PC-9 (cell line): ENCODE measurements at regions of chr17 and their contacts with region 1.

Region 1: GRCh38 chr17:75720725-75721462 is at the start of gene ITGB4:
- DNase-seq: peak; percentile 80 to 95
- H3K4me3 ChIP-seq: peak within 1 kb of the TSS; percentile 96
- H3K27ac ChIP-seq: peak within 1 kb of the TSS; percentile 38
- H3K4me1 ChIP-seq: peaks cover 28% of the 10 kb centered on the region
- H3K27me3 ChIP-seq: no peaks in the 10 kb centered on the region
- CTCF ChIP-seq: no peak
- total RNA-seq, gene ITGB4: 448 and 461 TPM in 2 replicates

Region 2: GRCh38 chr17:75498726-75499213 is 222.1 kb before region 1 on chr17:
- CTCF ChIA-PET with region 1: no interaction called
- POLR2A ChIA-PET with region 1: no interaction called
- intact Hi-C with region 1: no loop called
- DNase-seq: no peak
- H3K4me3 ChIP-seq: no peak overlapping the region
- H3K27ac ChIP-seq: no peak overlapping the region
- H3K4me1 ChIP-seq: no peaks in the 10 kb centered on the region
- H3K27me3 ChIP-seq: no peaks in the 10 kb centered on the region
- CTCF ChIP-seq: no peak

Region 3: DNA sequence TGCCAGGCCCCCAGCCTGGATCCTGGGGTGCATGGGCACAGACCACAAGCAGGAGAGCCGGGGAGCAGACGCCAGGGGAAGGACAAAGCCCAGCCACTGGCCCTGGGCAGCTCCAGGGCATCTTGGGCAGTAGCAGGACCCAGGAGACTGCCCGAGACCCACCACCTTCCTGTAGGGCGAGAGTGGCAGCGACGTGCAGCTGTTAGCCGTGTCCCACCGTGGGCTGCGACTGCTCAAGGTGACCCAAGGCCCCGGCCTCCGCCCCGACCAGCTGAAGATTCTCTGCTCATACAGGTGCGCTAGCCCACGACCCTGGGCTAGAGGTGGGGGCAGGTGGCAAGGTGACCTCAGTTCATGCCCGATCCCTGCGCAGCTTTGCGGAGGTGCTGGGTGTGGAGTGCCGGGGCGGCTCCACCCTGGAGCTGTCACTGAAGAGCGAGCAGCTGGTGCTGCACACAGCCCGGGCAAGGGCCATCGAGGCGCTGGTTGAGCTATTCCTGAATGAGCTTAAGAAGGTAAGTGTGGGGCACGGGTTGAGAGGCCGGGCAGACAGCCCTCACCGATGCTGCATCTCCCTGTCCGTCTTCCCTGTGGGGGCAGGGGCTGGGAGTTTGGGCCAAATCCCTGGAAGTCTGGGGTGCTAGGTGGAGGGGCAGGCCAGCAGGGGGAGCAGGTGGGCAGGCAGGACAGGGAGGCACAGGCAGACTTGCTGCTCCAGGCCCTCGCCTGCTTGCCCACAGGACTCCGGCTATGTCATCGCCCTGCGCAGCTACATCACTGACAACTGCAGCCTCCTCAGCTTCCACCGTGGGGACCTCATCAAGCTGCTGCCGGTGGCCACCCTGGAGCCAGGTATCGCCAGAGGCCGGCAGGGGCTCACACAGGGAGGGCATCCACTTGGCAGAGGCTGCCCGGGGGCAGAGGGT is 101.1 kb before region 1 on chr17:
- CTCF ChIA-PET with region 1: no interaction called
- POLR2A ChIA-PET with region 1: no interaction called
- intact Hi-C with region 1: no loop called
- DNase-seq: no peak
- H3K4me3 ChIP-seq: no peak overlapping the region
- H3K27ac ChIP-seq: no peak overlapping the region
- H3K4me1 ChIP-seq: no peaks in the 10 kb centered on the region
- H3K27me3 ChIP-seq: no peaks in the 10 kb centered on the region
- CTCF ChIP-seq: peak; percentile 70

Region 4: GRCh38 chr17:75679706-75680442 is 41.0 kb before region 1 on chr17:
- CTCF ChIA-PET with region 1: interaction called, 5 read pairs
- POLR2A ChIA-PET with region 1: interaction called, 17 read pairs
- intact Hi-C with region 1: loop called (anchors 1 kb)
- DNase-seq: peak; percentile 70 to 77
- H3K4me3 ChIP-seq: no peak overlapping the region
- H3K27ac ChIP-seq: peak overlapping the region; percentile 51
- H3K4me1 ChIP-seq: peaks cover 59% of the 10 kb centered on the region
- H3K27me3 ChIP-seq: no peaks in the 10 kb centered on the region
- CTCF ChIP-seq: peak; percentile 58

Region 5: GRCh38 chr17:75689441-75689873 is 31.4 kb before region 1 on chr17:
- CTCF ChIA-PET with region 1: interaction called, 5 read pairs
- POLR2A ChIA-PET with region 1: interaction called, 13 read pairs
- intact Hi-C with region 1: loop called (anchors 1 kb)
- DNase-seq: peak; percentile 57 to 96
- H3K4me3 ChIP-seq: peak overlapping the region; percentile 28; the same call in 1 of the 2 replicates
- H3K27ac ChIP-seq: peak overlapping the region; percentile 84
- H3K4me1 ChIP-seq: peaks cover 64% of the 10 kb centered on the region
- H3K27me3 ChIP-seq: no peaks in the 10 kb centered on the region
- CTCF ChIP-seq: no peak

Region 6: GRCh38 chr17:75707131-75707571 is 13.7 kb before region 1 on chr17:
- CTCF ChIA-PET with region 1: interaction called, 9 read pairs
- POLR2A ChIA-PET with region 1: interaction called, 10 read pairs
- intact Hi-C with region 1: loop called (anchors 1 kb)
- DNase-seq: peak; percentile 93 to 95
- H3K4me3 ChIP-seq: no peak overlapping the region
- H3K27ac ChIP-seq: peak overlapping the region; percentile 71
- H3K4me1 ChIP-seq: peaks cover 35% of the 10 kb centered on the region
- H3K27me3 ChIP-seq: no peaks in the 10 kb centered on the region
- CTCF ChIP-seq: no peak

Region 7: DNA sequence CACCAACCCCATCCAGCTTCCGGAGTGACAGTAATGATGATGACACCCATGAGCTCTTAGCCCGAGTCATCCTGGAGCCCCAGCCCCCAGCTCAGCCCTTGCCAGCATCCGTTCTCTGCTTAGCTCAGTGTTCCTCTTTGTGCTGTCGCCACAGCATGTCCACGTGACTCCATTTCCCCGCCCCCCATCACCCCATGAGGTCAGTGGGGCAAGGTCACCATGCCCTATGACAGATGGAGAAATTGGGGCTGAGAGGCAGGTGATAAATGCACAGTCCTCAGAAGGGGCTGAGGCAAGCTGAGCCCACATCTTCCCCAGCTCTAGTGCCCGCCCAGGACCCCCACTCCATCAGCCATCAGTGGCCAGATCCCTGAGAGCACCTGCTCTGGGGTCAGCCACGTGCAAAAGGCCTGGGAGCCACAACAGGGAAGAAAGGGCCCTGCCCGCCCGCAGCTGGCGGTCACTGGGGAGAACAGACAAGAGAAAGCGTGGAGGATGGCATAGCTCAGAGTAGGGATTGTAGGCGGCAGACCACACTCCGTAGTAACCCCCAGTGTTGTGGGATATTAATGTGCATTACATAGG is 17.4 kb after region 1 on chr17:
- CTCF ChIA-PET with region 1: no interaction called
- POLR2A ChIA-PET with region 1: interaction called, 25 read pairs
- intact Hi-C with region 1: no loop called
- DNase-seq: no peak
- H3K4me3 ChIP-seq: no peak overlapping the region
- H3K27ac ChIP-seq: no peak overlapping the region
- H3K4me1 ChIP-seq: no peaks in the 10 kb centered on the region
- H3K27me3 ChIP-seq: no peaks in the 10 kb centered on the region
- CTCF ChIP-seq: no peak

Region 8: GRCh38 chr17:75749545-75750389 is 28.9 kb after region 1 on chr17:
- CTCF ChIA-PET with region 1: interaction called, 5 read pairs
- POLR2A ChIA-PET with region 1: interaction called, 10 read pairs
- intact Hi-C with region 1: loop called (anchors 1 kb)
- DNase-seq: peak in 1 of 2 experiments; percentile 64
- H3K4me3 ChIP-seq: no peak overlapping the region
- H3K27ac ChIP-seq: no peak overlapping the region
- H3K4me1 ChIP-seq: 0 out of 2 replicates have a peak, but pooled peaks cover 3% of the 10 kb centered on the region
- H3K27me3 ChIP-seq: no peaks in the 10 kb centered on the region
- CTCF ChIP-seq: peak; percentile 92

Region 9: DNA sequence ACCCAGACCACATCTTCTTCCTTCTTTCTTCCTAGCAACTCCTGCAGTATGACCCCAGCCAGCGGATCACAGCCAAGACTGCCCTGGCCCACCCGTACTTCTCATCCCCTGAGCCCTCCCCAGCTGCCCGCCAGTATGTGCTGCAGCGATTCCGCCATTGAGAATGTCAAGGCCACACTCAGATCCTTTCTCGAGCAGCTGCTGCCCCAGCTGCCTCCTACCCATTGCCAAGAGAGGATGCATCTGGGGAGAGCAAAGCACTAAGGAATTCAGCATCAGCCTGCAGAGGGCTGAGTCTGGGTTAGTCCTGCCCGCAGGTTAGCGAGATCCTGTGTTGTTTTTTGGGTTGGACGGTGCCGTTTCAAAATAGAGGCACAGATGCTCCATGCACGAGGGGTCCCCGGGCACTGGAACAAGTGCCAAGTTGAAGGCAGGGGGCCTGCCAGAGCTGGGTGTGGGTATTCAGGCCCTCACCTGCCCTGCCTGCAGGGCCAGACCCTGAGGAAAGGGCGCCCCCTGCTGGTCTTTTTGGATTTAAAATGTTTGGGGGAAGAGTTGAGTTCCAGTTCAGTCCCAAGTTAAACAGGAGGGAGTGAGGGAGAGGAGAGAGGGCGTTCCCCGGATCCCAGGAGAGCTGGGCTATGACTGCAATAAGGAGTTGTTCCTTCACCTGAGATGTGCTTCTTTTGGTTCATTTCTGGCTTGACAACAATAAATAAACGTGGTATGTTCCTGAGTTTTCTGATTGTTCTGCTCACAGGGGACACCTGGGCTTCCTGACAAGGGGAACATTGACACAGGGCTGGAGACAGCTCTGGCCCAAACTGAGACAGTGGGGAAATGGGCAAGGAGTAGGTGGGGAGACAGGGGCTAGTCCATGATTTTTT is 284.6 kb after region 1 on chr17:
- CTCF ChIA-PET with region 1: no interaction called
- POLR2A ChIA-PET with region 1: interaction called, 18 read pairs
- intact Hi-C with region 1: no loop called
- DNase-seq: peak; percentile 55 to 82
- H3K4me3 ChIP-seq: no peak overlapping the region
- H3K27ac ChIP-seq: no peak overlapping the region
- H3K4me1 ChIP-seq: no peaks in the 10 kb centered on the region; the same call in 1 of the 2 replicates
- H3K27me3 ChIP-seq: no peaks in the 10 kb centered on the region
- CTCF ChIP-seq: peak; percentile 93